ENCODE measurements at regions of chr1 and their contacts with region 1.

Region 1: DNA sequence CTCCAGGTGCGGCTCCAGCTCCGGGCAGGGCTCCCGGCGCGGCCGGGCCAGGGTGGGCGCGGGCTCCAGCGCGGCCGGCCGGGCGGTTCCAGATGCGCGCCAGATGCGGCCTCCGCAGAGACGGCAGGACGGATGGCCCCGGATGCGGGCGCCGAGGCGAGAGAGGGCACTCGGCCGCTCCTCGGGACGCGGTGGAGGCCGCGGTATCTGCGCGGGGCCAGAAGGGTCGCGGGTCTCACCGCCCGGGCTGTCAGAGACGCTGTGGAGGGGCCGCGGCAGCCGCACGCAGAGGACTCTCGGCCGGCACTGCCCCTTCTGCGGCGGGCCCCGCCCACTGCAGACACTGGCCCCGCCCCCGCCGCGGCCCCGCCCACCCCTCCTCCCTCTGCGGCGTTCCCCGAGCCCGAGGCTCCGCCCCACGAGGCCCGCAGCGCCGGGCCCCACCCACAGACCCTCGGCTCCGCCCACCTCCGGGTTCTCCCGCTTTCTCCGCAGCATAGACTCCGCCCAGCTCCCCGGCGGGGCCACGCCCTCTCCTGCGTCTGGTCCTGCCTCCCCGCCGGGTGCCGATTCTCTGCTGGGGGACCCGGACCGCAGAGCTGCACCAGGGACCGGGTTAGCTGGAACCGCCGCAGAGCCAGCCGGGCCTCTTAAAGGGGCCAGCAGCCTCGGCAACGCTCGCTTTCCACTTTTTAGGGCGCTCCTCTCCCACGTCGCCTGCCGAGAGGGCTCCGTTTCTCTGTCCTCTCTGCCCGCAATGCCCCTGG is at the start of gene IFFO2:
- DNase-seq: peak; percentile 98 to 99
- ATAC-seq: peak; percentile 97 to 98 (median 98)
- H3K4me3 ChIP-seq: peak within 1 kb of the TSS; percentile 80
- H3K27ac ChIP-seq: peak within 1 kb of the TSS; percentile 68
- H3K4me1 ChIP-seq: peaks cover 15% of the 10 kb centered on the region
- H3K27me3 ChIP-seq: no peaks in the 10 kb centered on the region
- CTCF ChIP-seq: no peak
- total RNA-seq, gene IFFO2: 3.7 to 14.0 (median 6.8) TPM

Region 2: GRCh38 chr1:18922319-18922726 is 34.2 kb before region 1 on chr1:
- intact Hi-C with region 1: loop called in 1 of 2 experiments (anchors 5 kb)
- DNase-seq: peak; percentile 83 to 86
- ATAC-seq: peak; percentile 78 to 86 (median 80)
- H3K4me3 ChIP-seq: peak overlapping the region; percentile 53
- H3K27ac ChIP-seq: peak overlapping the region; percentile 86
- H3K4me1 ChIP-seq: peaks cover 36% of the 10 kb centered on the region
- H3K27me3 ChIP-seq: no peaks in the 10 kb centered on the region
- CTCF ChIP-seq: no peak

Region 3: DNA sequence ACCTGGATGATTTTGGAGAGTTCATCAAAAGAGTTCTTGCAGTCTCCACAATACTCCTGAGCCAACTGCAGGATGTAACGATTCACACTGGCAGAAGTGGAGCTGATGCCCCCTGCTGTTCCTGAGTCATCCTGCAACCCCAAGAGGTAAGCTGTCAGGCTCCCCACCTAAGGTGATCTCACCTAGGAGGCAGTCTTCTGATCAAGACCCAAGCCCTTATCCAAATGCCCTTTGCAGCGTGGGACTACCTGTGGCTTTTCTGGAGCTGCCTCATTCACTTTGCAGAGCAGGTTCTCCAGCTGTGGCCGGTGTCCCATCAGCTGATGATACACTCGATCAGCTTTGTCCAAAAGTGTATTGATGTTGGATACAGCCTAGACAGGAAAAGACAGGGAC is 157.1 kb after region 1 on chr1:
- intact Hi-C with region 1: no loop called
- DNase-seq: no peak
- ATAC-seq: peak in 1 of 4 donors; percentile 22
- H3K4me3 ChIP-seq: no peak overlapping the region
- H3K27ac ChIP-seq: no peak overlapping the region
- H3K4me1 ChIP-seq: no peaks in the 10 kb centered on the region
- H3K27me3 ChIP-seq: no peaks in the 10 kb centered on the region
- CTCF ChIP-seq: peak; percentile 26

Region 4: DNA sequence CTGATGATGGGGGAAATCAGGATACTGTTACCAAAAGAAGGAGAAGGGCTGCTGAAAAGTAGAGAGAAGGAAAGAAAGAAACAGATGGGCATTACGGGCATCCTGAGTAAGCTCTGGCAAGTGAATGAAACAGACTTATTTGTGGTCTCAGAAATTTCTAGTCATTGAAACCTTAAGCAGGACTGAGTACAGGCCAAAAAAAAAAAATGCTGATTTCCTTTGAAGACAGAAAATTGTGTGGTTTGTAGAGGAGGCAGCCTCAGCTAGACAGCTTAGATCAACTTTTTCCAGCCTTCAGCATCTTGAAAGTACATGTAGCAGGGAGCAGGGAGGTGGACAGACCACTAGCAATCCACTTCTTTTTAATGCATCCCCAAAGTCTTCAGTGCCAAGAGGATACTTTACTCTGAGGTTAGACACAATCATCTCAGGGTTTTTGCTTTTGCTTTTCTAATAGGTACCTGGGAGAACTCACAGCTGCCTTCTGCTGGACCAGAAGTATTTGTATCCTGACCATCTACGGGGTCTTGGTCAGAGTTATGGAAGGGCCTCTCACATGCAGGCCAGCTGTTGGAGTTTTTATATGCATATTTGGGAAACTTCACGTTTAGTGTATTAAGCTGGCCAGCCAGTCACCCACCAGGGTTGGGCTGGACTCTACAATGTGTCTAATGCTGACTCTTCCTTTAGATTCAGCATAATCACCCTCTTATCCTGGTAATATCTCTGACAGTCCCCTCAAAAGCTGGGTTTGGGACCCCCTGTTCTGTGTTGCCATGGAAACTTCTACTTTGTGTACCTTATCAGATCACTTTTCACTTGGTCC is 539.5 kb after region 1 on chr1:
- intact Hi-C with region 1: no loop called
- DNase-seq: no peak
- ATAC-seq: no peak
- H3K4me3 ChIP-seq: no peak overlapping the region
- H3K27ac ChIP-seq: peak overlapping the region; percentile 59
- H3K4me1 ChIP-seq: peaks cover 6% of the 10 kb centered on the region
- H3K27me3 ChIP-seq: no peaks in the 10 kb centered on the region
- CTCF ChIP-seq: no peak

Measured in psoas muscle (tissue), 8 donors.